Activated T-helper 1 cell treated with anti-CD3 and anti-CD28 coated beads, Interleukin-12 subunit alpha, Interleukin-12 subunit beta, Interleukin-2, Interleukin-4 antibody, amounts not matched to agents 30 ng/mL and 10 ng/mL and 1 ng/mL, durations not matched to agents 14 hours and 24 hours and 36 hours (primary cell): ENCODE measurements at regions of chr1 and their contacts with region 1.

Region 1: DNA sequence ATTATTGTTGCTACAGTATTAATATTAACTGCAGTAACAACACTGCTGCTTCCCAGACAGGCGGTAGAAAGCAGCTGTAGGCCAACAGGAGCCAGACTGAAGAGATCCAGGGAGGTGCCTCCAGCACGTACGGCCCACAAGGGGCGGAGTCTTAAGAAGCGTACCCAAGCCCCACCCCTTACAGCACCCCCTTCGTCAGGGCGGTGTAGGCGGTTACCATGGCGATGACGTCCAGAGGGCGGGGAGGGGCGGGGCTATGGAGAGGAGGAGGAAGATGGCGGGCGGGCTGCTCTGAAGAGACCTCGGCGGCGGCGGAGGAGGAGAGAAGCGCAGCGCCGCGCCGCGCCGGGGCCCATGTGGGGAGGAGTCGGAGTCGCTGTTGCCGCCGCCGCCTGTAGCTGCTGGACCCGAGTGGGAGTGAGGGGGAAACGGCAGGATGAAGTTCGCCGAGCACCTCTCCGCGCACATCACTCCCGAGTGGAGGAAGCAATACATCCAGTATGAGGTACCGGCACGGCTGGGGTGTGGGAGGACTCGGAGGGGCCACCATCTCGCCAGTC is at the start of gene XPR1:
- DNase-seq: peak; percentile 91
- H3K4me3 Mint-ChIP-seq: peak within 1 kb of the TSS; percentile 87
- H3K27ac Mint-ChIP-seq: peak within 1 kb of the TSS; percentile 87
- H3K4me1 Mint-ChIP-seq: peaks cover 8% of the 10 kb centered on the region
- H3K27me3 Mint-ChIP-seq: peaks cover 5% of the 10 kb centered on the region
- total RNA-seq, gene XPR1: 21.1 and 21.2 TPM in 2 replicates

Region 2: GRCh38 chr1:180154325-180155181 is 477.3 kb before region 1 on chr1 and contains the start of gene QSOX1:
- intact Hi-C with region 1: loop called (anchors 1 kb)
- DNase-seq: peak; percentile 85
- H3K4me3 Mint-ChIP-seq: peak within 1 kb of the TSS; percentile 88
- H3K27ac Mint-ChIP-seq: peak within 1 kb of the TSS; percentile 94
- H3K4me1 Mint-ChIP-seq: peaks cover 44% of the 10 kb centered on the region
- H3K27me3 Mint-ChIP-seq: peaks cover 4% of the 10 kb centered on the region
- total RNA-seq, gene QSOX1: 61.4 and 63.7 TPM in 2 replicates

Region 3: GRCh38 chr1:180482425-180483275 is 149.2 kb before region 1 on chr1:
- intact Hi-C with region 1: no loop called
- DNase-seq: no peak
- H3K4me3 Mint-ChIP-seq: no peak overlapping the region
- H3K27ac Mint-ChIP-seq: no peak overlapping the region
- H3K4me1 Mint-ChIP-seq: peaks cover 18% of the 10 kb centered on the region
- H3K27me3 Mint-ChIP-seq: no peaks in the 10 kb centered on the region

Region 4: GRCh38 chr1:180571832-180572636 is 59.8 kb before region 1 on chr1:
- intact Hi-C with region 1: loop called (anchors 1 kb)
- DNase-seq: no peak
- H3K4me3 Mint-ChIP-seq: peak overlapping the region; percentile 1
- H3K27ac Mint-ChIP-seq: peak overlapping the region; percentile 85
- H3K4me1 Mint-ChIP-seq: peaks cover 23% of the 10 kb centered on the region
- H3K27me3 Mint-ChIP-seq: peaks cover 10% of the 10 kb centered on the region

Region 5: GRCh38 chr1:180662709-180663108 is 30.9 kb after region 1 on chr1:
- intact Hi-C with region 1: no loop called
- DNase-seq: no peak
- H3K4me3 Mint-ChIP-seq: no peak overlapping the region
- H3K27ac Mint-ChIP-seq: no peak overlapping the region
- H3K4me1 Mint-ChIP-seq: no peaks in the 10 kb centered on the region
- H3K27me3 Mint-ChIP-seq: no peaks in the 10 kb centered on the region

Region 6: GRCh38 chr1:181014477-181015250 is 382.8 kb after region 1 on chr1:
- intact Hi-C with region 1: loop called (anchors 2 kb)
- DNase-seq: no peak
- H3K4me3 Mint-ChIP-seq: no peak overlapping the region
- H3K27ac Mint-ChIP-seq: no peak overlapping the region
- H3K4me1 Mint-ChIP-seq: peaks cover 44% of the 10 kb centered on the region
- H3K27me3 Mint-ChIP-seq: no peaks in the 10 kb centered on the region

Region 7: GRCh38 chr1:181105134-181106021 is 473.5 kb after region 1 on chr1:
- intact Hi-C with region 1: loop called (anchors 5 kb)
- DNase-seq: peak; percentile 87
- H3K4me3 Mint-ChIP-seq: peak overlapping the region; percentile 82
- H3K27ac Mint-ChIP-seq: peak overlapping the region; percentile 88
- H3K4me1 Mint-ChIP-seq: peaks cover 72% of the 10 kb centered on the region
- H3K27me3 Mint-ChIP-seq: peaks cover 34% of the 10 kb centered on the region